ENCODE measurements at regions of chr12 and their contacts with region 1.

Region 1: DNA sequence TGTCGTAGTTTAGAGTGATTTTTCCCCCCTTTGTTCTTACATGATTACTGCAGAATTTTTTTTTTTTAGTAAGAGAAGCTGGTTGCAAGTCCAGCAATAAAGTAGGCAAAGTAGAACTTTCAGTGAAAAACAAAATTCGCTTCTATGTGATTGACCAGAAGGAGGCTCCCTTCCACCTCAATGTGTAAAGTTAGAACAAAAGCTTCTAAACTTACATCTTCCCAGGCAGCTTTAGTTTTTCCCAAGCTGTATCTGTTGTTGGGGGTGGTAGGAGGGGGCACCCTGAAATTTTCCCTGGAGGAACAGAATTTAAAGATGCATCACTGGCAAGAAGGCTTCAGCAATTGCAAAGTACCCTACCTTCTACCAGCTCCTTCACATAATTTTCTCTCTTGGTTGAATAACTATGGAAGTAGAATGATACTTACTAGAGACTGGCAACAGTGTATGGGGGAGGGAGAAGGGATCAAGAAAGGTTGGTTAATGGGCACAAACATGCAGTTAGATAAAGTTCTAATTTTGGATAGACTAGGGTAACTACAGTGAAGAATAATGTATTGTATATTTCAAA is 87.3 kb upstream of the E2F7 start:
- DNase-seq: no peak
- ATAC-seq: no peak

Region 2: DNA sequence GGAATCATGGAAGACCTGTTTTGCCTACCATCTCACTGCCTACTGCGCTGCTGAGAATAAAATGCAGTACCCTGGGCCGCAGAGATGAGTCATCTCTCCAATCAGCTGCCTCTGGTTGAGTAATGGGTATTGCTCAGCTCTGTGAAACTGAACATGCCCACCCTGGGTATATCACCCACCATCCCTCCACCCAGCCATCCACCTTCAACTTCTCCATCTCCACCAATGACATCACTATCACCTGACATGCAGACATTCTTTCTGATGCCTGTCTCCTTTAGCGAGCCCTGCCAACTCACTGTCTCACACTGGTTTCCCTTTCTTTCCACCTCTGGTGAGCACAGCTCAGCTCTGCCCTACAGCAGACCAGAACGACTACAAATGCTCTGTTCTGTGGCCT is 121.0 kb before region 1 on chr12:
- intact Hi-C with region 1: no loop called
- DNase-seq: no peak
- ATAC-seq: no peak

Region 3: DNA sequence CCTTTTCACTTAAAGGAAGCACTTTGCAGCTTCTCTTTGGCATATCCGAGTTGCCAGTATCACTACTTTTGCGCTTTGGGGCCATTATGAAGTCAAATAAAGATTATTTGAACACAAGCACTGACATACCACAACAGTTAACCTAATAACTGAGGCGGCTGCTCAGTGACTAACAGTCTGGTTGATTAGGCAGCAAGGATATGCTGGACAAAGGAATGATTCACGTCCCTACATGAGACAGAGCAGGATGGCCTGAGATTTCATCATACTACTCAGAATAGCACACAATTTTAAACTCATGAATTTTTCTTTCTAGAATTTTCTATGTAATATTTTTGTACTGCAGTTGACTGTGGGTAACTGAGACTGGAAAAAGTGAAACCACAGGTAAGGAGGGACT is 30.5 kb before region 1 on chr12:
- intact Hi-C with region 1: no loop called
- DNase-seq: no peak
- ATAC-seq: no peak

Region 4: GRCh38 chr12:77382096-77382742 is 229.5 kb after region 1 on chr12:
- intact Hi-C with region 1: loop called (anchors 10 kb)
- DNase-seq: no peak
- ATAC-seq: no peak

Region 5: DNA sequence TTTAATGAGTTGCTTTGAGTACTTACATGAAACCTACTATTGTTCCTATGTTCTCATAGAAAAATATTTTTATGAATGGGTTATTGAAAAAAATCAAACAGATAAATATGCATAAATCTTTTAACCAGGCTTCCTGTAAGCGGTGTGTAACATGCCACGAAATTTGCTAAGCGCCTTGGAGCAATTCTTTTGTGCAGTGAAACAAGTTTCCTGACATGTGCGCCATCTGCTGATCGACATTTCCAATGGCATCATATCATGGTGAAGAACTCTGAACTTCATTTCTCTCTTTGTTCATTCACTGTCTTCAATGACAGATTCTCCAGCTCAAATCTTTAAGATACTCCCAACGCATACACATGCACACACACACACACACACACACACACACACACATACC is 532.4 kb after region 1 on chr12:
- intact Hi-C with region 1: loop called (anchors 1 kb)
- DNase-seq: no peak
- ATAC-seq: peak; percentile 57

Region 6: DNA sequence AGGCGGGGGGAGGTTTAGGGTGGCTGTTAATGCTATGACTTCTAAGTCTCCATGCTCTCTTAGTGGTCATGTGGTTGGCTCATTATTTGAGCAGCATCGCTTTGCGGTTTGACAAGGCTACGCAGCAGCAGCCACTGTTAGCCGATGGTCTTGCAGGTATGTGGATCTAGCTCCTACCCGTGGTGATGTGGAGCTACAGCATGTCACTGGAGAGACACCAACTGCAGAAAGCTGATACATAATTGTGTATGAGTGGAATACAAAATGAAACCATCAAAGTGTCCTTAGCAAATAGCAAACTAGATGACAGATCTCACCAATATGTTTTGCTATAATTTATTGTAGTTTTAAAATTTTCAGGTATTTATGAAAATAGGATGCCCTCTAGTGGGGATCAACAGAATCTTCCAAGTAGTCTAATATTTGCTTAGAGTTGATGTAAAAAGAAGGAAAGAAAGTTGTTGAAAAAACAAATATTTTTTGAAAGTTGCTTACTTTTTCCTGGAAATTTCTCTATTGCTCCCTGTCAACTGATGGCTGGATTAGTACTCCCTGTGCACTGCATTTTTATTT is 772.9 kb after region 1 on chr12:
- intact Hi-C with region 1: loop called (anchors 10 kb)
- DNase-seq: no peak
- ATAC-seq: peak; percentile 95

Measured in Right ventricle myocardium inferior (tissue), 1 donor.